SK-N-SH (cell line): ENCODE measurements at regions of chr10 and their contacts with region 1.

Region 1: GRCh38 chr10:102503281-102504220 is at the start of gene SUFU:
- DNase-seq: peak; percentile 98
- H3K4me3 ChIP-seq: peak within 1 kb of the TSS; percentile 85 to 98
- H3K27ac ChIP-seq: peak within 1 kb of the TSS; percentile 45 to 78; a peak in 3 of 4 replicates
- H3K4me1 ChIP-seq: peaks cover 8 to 15% of the 10 kb centered on the region in 2 experiments; a peak in 2 of 4 replicates
- H3K27me3 ChIP-seq: no peaks in the 10 kb centered on the region
- CTCF ChIP-seq: peak; percentile 88
- EP300 ChIP-seq: no peak; a peak in 1 of 4 replicates
- RAD21 ChIP-seq: peak; percentile 86
- polyA plus RNA-seq, gene SUFU: 4.6 and 5.7 TPM in 2 replicates

Region 2: GRCh38 chr10:102322914-102323313 is 180.6 kb before region 1 on chr10:
- CTCF ChIA-PET with region 1: no interaction called
- POLR2A ChIA-PET with region 1: no interaction called
- DNase-seq: no peak
- H3K4me3 ChIP-seq: no peak overlapping the region
- H3K27ac ChIP-seq: no peak overlapping the region
- H3K4me1 ChIP-seq: no peaks in the 10 kb centered on the region; a peak in 1 of 4 replicates
- H3K27me3 ChIP-seq: no peaks in the 10 kb centered on the region
- CTCF ChIP-seq: no peak
- EP300 ChIP-seq: no peak
- RAD21 ChIP-seq: no peak

Region 3: GRCh38 chr10:102347241-102347828 is 156.2 kb before region 1 on chr10:
- CTCF ChIA-PET with region 1: no interaction called
- POLR2A ChIA-PET with region 1: no interaction called
- DNase-seq: peak; percentile 45
- H3K4me3 ChIP-seq: no peak overlapping the region
- H3K27ac ChIP-seq: no peak overlapping the region
- H3K4me1 ChIP-seq: peaks cover 0 to 17% of the 10 kb centered on the region in 2 experiments; a peak in 2 of 4 replicates
- H3K27me3 ChIP-seq: no peaks in the 10 kb centered on the region
- CTCF ChIP-seq: peak; percentile 66
- EP300 ChIP-seq: no peak
- RAD21 ChIP-seq: peak; percentile 81

Region 4: DNA sequence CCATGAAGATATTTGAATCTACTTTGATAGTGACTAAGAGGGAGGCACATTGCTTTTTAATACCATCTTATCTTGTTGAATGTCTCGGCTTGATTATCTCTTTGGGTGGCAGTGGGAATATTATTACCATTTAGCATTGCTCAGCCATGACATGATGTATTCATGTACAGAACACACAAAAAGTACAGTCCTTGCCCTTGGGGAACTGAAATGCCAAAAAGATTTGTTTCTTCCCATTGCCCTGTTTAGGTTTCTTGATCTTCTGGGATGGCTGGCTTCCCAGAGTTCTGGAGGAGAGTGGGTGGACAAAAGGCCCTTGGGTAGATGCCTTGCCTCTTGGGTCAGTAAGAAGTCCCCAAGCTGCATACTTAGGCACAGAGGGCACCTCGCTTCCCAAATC is 24.0 kb after region 1 on chr10:
- CTCF ChIA-PET with region 1: interaction called, 12 read pairs
- POLR2A ChIA-PET with region 1: no interaction called
- DNase-seq: no peak
- H3K4me3 ChIP-seq: no peak overlapping the region
- H3K27ac ChIP-seq: no peak overlapping the region
- H3K4me1 ChIP-seq: peaks cover 0 to 1% of the 10 kb centered on the region in 2 experiments; a peak in 1 of 4 replicates
- H3K27me3 ChIP-seq: no peaks in the 10 kb centered on the region
- CTCF ChIP-seq: no peak
- EP300 ChIP-seq: no peak
- RAD21 ChIP-seq: no peak

Region 5: DNA sequence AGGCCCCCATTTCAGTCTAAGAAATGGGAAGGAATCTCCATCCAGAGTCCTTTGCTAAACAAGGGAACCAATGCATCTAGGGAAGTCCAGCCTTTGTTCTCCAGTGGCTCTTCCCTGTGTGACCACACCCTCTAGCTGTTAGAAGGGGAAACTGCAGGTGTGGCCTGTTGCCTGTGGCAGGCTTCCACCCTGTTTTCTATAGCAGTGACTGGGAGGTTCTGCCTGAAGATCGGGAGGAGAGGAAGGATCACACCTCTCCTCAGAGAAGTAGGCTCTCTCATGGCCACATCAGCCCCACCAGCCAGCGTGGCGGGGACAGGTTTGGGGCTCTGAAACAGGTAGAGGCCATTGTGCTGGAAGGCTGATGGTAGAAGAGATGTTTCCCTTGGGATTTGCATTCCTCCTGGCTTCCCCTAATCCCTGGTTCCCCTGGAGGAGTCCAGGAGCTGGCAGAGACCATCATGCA is 93.0 kb after region 1 on chr10:
- CTCF ChIA-PET with region 1: interaction called, 11 read pairs
- POLR2A ChIA-PET with region 1: no interaction called
- DNase-seq: peak; percentile 76
- H3K4me3 ChIP-seq: no peak overlapping the region; a peak in 1 of 4 replicates
- H3K27ac ChIP-seq: no peak overlapping the region; a peak in 1 of 4 replicates
- H3K4me1 ChIP-seq: peaks cover 3 to 5% of the 10 kb centered on the region in 2 experiments; a peak in 2 of 4 replicates
- H3K27me3 ChIP-seq: no peaks in the 10 kb centered on the region
- CTCF ChIP-seq: peak; percentile 69
- EP300 ChIP-seq: no peak
- RAD21 ChIP-seq: peak; percentile 78

Region 6: DNA sequence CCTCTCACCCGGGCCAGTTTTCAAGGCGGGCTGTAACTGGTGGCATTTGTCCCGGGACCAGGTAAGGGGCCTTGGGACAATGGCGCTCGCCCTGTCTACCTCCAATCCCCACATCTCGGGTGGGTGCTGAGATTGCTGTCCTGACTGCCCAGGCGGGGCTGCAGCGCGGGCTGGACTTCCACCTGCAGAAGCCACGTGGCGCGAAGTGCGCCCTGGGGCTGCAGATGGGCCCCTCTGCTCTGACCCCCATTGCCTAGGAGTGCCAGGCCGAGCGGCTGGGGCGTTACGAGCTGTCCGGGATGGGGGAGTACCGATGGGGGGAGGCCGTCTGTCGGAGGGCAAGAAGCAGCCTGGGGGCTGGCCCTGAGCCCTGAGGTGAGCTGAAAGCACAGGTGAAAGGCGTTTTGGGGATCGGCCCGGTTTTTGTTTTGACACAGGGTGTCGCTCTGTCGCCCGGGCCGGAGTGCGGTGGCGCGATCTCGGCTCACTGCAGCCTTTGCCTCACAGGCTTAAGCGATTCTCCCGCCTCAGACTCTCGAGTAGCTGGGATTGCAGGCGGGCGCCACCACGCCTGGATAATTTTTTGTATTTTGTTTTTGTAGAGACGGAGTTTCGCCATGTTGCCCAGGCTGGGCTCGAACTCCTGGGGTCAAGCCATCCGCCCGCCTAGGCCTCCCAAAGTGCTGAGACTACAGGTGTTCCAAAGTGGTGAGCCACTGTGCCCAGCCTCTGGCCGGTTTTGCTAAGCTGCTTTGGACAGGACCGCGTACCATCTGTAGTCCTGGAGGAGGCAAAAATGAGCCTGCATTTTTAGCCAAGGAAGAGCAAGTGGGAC is 211.3 kb after region 1 on chr10 and contains the start of gene SFXN2:
- CTCF ChIA-PET with region 1: no interaction called
- POLR2A ChIA-PET with region 1: no interaction called
- DNase-seq: no peak
- H3K4me3 ChIP-seq: peak within 1 kb of the TSS; percentile 87 to 91
- H3K27ac ChIP-seq: peak within 1 kb of the TSS; percentile 80 to 86
- H3K4me1 ChIP-seq: peaks cover 18 to 20% of the 10 kb centered on the region in 2 experiments; a peak in 3 of 4 replicates
- H3K27me3 ChIP-seq: no peaks in the 10 kb centered on the region
- CTCF ChIP-seq: no peak
- EP300 ChIP-seq: no peak; a peak in 1 of 4 replicates
- RAD21 ChIP-seq: no peak
- polyA plus RNA-seq, gene SFXN2: 10.2 and 10.6 TPM in 2 replicates